Naive thymus-derived CD4-positive, alpha-beta T cell (primary cell): ENCODE measurements at regions of chr1 and their contacts with region 1.

Region 1: GRCh38 chr1:77779529-77780281 is at the start of gene MIGA1:
- DNase-seq: peak; percentile 61 to 92 (median 86)
- ATAC-seq: peak; percentile 99
- H3K4me3 ChIP-seq: peak within 1 kb of the TSS; percentile 68
- H3K4me3 Mint-ChIP-seq: peak within 1 kb of the TSS; percentile 90 to 98 (median 94)
- H3K27ac ChIP-seq: peak within 1 kb of the TSS; percentile 87
- H3K27ac Mint-ChIP-seq: peak within 1 kb of the TSS; percentile 88 to 96 (median 93)
- H3K4me1 ChIP-seq: peaks cover 11 to 15% of the 10 kb centered on the region in 2 donors
- H3K4me1 Mint-ChIP-seq: peaks cover 21 to 54% (median 49%) of the 10 kb centered on the region in 7 donors
- H3K27me3 ChIP-seq: no peaks in the 10 kb centered on the region
- H3K27me3 Mint-ChIP-seq: peaks cover 0 to 3% (median 0%) of the 10 kb centered on the region in 5 donors
- total RNA-seq, gene MIGA1: 12.1 to 23.5 (median 15.9) TPM

Region 2: GRCh38 chr1:77744576-77744975 is 35.1 kb before region 1 on chr1:
- CTCF ChIA-PET with region 1: no interaction called
- POLR2A ChIA-PET with region 1: interaction called, 3 read pairs
- intact Hi-C with region 1: loop called in 1 of 2 experiments (anchors 5 kb)
- DNase-seq: peak in 1 of 9 donors; percentile 12
- ATAC-seq: no peak
- H3K4me3 ChIP-seq: no peak overlapping the region
- H3K4me3 Mint-ChIP-seq: peak overlapping the region in 2 of 10 donors; percentile 20 to 24
- H3K27ac ChIP-seq: no peak overlapping the region
- H3K27ac Mint-ChIP-seq: peak overlapping the region in 6 of 9 donors; percentile 10 to 57 (median 40)
- H3K4me1 ChIP-seq: peaks cover 0 to 4% of the 10 kb centered on the region in 2 donors
- H3K4me1 Mint-ChIP-seq: peaks cover 13 to 70% (median 60%) of the 10 kb centered on the region in 7 donors
- H3K27me3 ChIP-seq: no peaks in the 10 kb centered on the region
- H3K27me3 Mint-ChIP-seq: no peaks in the 10 kb centered on the region